H1 (cell line): ENCODE measurements at regions of chr2 and their contacts with region 1.

Region 1: GRCh38 chr2:34012715-34013302 is 413.7 kb upstream of the FAM98A start:
- DNase-seq: peak; percentile 53 to 84
- H3K4me3 ChIP-seq: no peak overlapping the region
- H3K27ac ChIP-seq: no peak overlapping the region
- H3K4me1 ChIP-seq: no peaks in the 10 kb centered on the region
- H3K27me3 ChIP-seq: no peaks in the 10 kb centered on the region
- CTCF ChIP-seq: peak; percentile 78 to 88 (median 80)
- EP300 ChIP-seq: 0 out of 3 replicates have a peak, but pooled peaks of 1 of the 2 experiments have one; percentile 48
- POLR2A ChIP-seq: no peak
- RAD21 ChIP-seq: peak; percentile 92

Region 2: DNA sequence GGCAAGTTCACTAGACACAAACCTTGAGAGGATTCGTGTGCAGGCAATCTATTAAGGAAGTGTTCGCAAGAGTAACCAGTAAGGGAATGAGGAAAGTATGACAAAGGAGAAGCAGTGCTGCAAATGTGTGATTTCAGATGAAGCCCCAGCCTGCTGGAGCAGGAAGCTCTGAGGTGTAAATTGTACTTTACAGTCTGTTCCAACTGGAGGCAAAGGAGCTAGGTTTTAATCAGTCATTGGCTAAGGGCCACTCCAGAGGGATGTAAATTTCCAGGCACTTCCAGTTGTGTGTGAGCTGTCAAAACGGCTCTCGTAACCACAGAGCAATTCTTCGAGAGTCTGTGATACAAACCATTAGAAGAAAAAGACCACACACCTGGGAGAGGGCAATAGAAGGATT is 54.2 kb before region 1 on chr2:
- CTCF ChIA-PET with region 1: no interaction called
- POLR2A ChIA-PET with region 1: no interaction called
- DNase-seq: no peak
- H3K4me3 ChIP-seq: no peak overlapping the region
- H3K27ac ChIP-seq: no peak overlapping the region
- H3K4me1 ChIP-seq: no peaks in the 10 kb centered on the region
- H3K27me3 ChIP-seq: no peaks in the 10 kb centered on the region
- CTCF ChIP-seq: no peak
- EP300 ChIP-seq: no peak
- POLR2A ChIP-seq: no peak
- RAD21 ChIP-seq: no peak

Region 3: DNA sequence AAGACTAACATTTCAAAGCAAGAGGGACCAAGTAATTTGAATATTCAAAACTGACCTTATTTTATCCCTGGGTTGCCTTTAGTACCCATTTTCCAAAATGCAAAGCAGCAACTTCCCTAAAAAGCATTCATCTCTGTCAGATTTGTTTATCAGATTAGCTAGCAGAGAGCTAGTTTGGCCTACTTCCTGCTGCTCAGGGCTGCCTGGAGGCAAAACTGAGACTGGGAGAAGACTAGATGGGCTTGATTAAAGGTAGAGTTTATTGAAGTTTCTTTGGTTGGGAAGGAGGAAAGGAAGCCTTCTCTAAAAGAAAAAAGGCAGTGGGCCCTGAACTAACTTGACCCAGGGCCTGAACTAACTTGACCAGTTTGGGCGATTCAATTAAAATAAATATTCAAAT is 12.4 kb after region 1 on chr2:
- CTCF ChIA-PET with region 1: interaction called, 16 read pairs
- POLR2A ChIA-PET with region 1: no interaction called
- DNase-seq: no peak
- H3K4me3 ChIP-seq: no peak overlapping the region
- H3K27ac ChIP-seq: no peak overlapping the region
- H3K4me1 ChIP-seq: no peaks in the 10 kb centered on the region
- H3K27me3 ChIP-seq: peaks cover 0 to 1% (median 0%) of the 10 kb centered on the region in 4 experiments; a peak in 1 of 7 replicates
- CTCF ChIP-seq: no peak
- EP300 ChIP-seq: no peak
- POLR2A ChIP-seq: no peak
- RAD21 ChIP-seq: no peak

Region 4: DNA sequence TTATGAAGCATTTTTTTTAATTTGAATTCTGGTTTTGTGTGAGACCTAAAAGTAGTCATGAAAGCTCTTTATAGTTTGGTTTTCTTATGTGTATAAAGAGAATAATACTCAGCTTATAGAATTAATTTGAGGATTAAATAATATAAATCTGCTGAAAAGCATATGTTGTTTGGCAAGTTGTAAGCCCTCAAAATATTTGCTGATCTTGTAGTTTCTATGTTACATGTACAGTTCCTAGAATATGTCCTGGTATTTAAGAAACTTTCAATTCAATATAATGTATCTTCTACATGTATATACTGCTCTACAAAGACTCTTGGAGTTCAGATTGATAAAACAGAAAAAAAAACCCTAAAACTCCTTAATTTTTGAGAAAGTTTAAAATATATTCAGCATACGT is 191.8 kb after region 1 on chr2:
- CTCF ChIA-PET with region 1: no interaction called
- POLR2A ChIA-PET with region 1: no interaction called
- DNase-seq: no peak
- H3K4me3 ChIP-seq: no peak overlapping the region
- H3K27ac ChIP-seq: no peak overlapping the region
- H3K4me1 ChIP-seq: no peaks in the 10 kb centered on the region
- H3K27me3 ChIP-seq: no peaks in the 10 kb centered on the region
- CTCF ChIP-seq: no peak
- EP300 ChIP-seq: no peak
- POLR2A ChIP-seq: no peak
- RAD21 ChIP-seq: no peak